ENCODE measurements at regions of chr12 and their contacts with region 1.

Region 1: GRCh38 chr12:108468201-108468968 is 46.7 kb upstream of the FICD start:
- DNase-seq: no peak
- ATAC-seq: no peak
- H3K4me3 ChIP-seq: no peak overlapping the region
- H3K27ac ChIP-seq: no peak overlapping the region
- H3K4me1 ChIP-seq: no peaks in the 10 kb centered on the region
- H3K27me3 ChIP-seq: no peaks in the 10 kb centered on the region

Region 2: DNA sequence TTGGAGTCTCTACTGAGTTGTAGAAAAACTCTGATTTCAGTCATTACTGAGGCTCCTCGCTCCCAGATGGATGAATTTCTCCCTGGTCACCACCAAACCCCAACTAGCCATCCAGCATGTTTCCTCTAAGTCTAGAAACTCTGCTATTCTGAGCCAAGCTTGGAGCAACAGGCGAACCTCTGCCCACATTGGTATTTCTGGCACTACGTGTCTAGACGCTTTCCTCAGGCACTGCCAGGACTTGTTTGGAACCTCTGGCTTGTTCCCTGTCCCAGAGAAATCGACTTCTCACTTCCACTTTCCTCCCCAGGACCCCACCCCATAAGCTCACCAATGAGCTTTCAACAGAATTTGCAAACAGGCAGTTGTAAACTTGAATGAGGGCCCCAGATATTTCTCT is 311.7 kb before region 1 on chr12:
- intact Hi-C with region 1: no loop called
- DNase-seq: no peak
- ATAC-seq: peak in 1 of 2 donors; percentile 46
- H3K4me3 ChIP-seq: no peak overlapping the region
- H3K27ac ChIP-seq: no peak overlapping the region
- H3K4me1 ChIP-seq: peaks cover 4% of the 10 kb centered on the region
- H3K27me3 ChIP-seq: no peaks in the 10 kb centered on the region

Region 3: DNA sequence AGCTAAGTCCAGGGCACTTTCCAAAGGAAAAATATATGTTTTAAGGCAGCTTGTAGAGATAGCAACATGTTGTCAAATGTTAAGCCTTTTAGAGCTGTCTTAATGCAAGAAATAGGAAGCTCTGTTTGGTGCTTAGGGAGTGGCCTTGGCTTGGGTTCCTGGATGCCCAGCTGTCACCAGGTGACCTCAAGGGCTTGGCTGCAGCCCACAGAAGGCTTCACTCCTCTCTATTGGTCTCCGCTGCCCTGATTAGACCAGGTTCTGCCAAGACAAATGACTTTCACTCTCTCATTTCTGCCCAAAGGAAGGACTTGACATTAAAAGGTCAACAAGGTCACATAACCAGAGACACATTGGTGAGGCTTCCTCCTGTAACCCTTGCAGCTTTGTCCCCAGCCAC is 262.5 kb before region 1 on chr12:
- intact Hi-C with region 1: loop called in 1 of 4 experiments (anchors 10 kb)
- DNase-seq: no peak
- ATAC-seq: no peak
- H3K4me3 ChIP-seq: no peak overlapping the region
- H3K27ac ChIP-seq: no peak overlapping the region
- H3K4me1 ChIP-seq: no peaks in the 10 kb centered on the region
- H3K27me3 ChIP-seq: no peaks in the 10 kb centered on the region